Common myeloid progenitor, CD34-positive (primary cell): ENCODE measurements at regions of chr7 and their contacts with region 1.

Region 1: GRCh38 chr7:128053023-128053422 is 21.8 kb upstream of the LRRC4 start:
- DNase-seq: peak; percentile 21 to 62 (median 57)
- H3K4me3 ChIP-seq: no peak overlapping the region
- H3K27ac ChIP-seq: no peak overlapping the region
- H3K4me1 ChIP-seq: peaks cover 0 to 10% (median 7%) of the 10 kb centered on the region in 4 experiments
- H3K27me3 ChIP-seq: no peaks in the 10 kb centered on the region

Region 2: GRCh38 chr7:128030654-128031611 is 22.1 kb before region 1 on chr7 and contains the start of gene LRRC4:
- CTCF ChIA-PET with region 1: no interaction called
- POLR2A ChIA-PET with region 1: no interaction called
- DNase-seq: peak; percentile 54 to 80 (median 68)
- H3K4me3 ChIP-seq: peak within 1 kb of the TSS; percentile 28 to 78 (median 67)
- H3K27ac ChIP-seq: no peak within 1 kb of the TSS
- H3K4me1 ChIP-seq: peaks cover 0 to 28% (median 23%) of the 10 kb centered on the region in 4 experiments
- H3K27me3 ChIP-seq: peaks cover 6 to 50% (median 14%) of the 10 kb centered on the region in 5 experiments

Region 3: DNA sequence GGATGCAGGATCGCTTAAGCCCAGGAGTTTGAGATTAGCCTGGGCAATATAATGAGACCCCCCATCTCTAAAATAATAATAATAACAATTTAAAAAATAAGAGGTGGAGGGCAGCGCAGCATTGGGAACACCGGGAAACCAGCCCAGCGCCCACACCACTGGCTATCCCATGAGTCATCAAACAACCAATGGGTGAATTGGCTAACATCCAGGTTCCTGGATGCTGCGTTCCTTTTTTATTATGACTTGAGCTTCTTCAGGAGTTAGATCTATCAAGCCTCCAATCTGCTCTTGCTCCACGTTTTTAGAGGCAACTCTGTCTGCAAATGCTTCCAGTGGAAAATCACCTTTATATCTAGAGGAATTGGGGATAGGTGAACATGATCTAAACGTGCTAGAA is 11.8 kb before region 1 on chr7:
- CTCF ChIA-PET with region 1: interaction called, 19 read pairs
- POLR2A ChIA-PET with region 1: no interaction called
- DNase-seq: no peak
- H3K4me3 ChIP-seq: no peak overlapping the region
- H3K27ac ChIP-seq: no peak overlapping the region
- H3K4me1 ChIP-seq: peaks cover 0 to 6% (median 1%) of the 10 kb centered on the region in 4 experiments
- H3K27me3 ChIP-seq: no peaks in the 10 kb centered on the region

Region 4: GRCh38 chr7:128093614-128094570 is 40.9 kb after region 1 on chr7:
- CTCF ChIA-PET with region 1: no interaction called
- POLR2A ChIA-PET with region 1: no interaction called
- DNase-seq: no peak
- H3K4me3 ChIP-seq: no peak overlapping the region
- H3K27ac ChIP-seq: no peak overlapping the region
- H3K4me1 ChIP-seq: no peaks in the 10 kb centered on the region
- H3K27me3 ChIP-seq: no peaks in the 10 kb centered on the region